BJ (cell line): ENCODE measurements at regions of chr6 and their contacts with region 1.

Region 1: GRCh38 chr6:27146706-27147505 is 100.6 kb upstream of the PRSS16 start:
- DNase-seq: peak; percentile 100
- H3K4me3 ChIP-seq: peak overlapping the region; percentile 63
- H3K27me3 ChIP-seq: no peaks in the 10 kb centered on the region
- CTCF ChIP-seq: no peak

Region 2: GRCh38 chr6:26156076-26156849 is 990.6 kb before region 1 on chr6:
- CTCF ChIA-PET with region 1: no interaction called
- POLR2A ChIA-PET with region 1: interaction called, 14 read pairs
- DNase-seq: peak; percentile 65
- H3K4me3 ChIP-seq: peak overlapping the region; percentile 54
- H3K27me3 ChIP-seq: no peaks in the 10 kb centered on the region
- CTCF ChIP-seq: no peak; the same call in 1 of the 2 replicates

Region 3: DNA sequence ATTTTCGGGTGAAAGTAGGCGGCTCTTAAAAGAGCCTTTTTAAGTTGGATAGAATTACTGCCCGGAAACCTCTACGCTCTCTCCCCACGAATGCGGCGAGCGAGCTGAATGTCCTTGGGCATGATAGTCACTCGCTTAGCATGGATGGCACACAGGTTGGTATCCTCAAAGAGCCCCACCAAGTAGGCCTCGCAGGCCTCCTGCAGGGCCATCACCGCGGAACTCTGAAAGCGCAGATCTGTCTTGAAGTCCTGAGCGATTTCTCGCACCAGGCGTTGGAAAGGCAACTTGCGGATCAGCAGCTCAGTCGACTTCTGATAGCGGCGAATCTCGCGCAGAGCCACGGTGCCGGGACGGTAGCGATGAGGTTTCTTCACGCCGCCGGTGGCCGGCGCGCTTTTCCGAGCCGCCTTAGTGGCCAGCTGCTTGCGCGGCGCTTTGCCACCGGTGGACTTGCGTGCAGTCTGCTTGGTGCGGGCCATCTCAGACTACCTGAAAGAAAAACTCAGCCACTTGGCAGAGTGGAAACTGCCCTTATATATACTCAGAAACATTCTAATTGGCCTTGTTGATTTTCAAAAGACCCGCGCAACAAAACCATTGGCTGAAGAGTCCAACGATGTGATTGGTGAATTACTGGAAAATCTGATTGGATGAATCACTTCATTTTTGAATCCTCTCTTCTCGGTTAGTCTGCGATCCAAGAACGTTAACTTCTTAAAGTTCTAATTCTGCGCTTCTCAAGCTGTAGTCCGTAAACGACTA is 875.8 kb before region 1 on chr6:
- CTCF ChIA-PET with region 1: no interaction called
- POLR2A ChIA-PET with region 1: interaction called, 16 read pairs
- DNase-seq: peak; percentile 61
- H3K4me3 ChIP-seq: peak overlapping the region; percentile 53
- H3K27me3 ChIP-seq: no peaks in the 10 kb centered on the region
- CTCF ChIP-seq: no peak

Region 4: DNA sequence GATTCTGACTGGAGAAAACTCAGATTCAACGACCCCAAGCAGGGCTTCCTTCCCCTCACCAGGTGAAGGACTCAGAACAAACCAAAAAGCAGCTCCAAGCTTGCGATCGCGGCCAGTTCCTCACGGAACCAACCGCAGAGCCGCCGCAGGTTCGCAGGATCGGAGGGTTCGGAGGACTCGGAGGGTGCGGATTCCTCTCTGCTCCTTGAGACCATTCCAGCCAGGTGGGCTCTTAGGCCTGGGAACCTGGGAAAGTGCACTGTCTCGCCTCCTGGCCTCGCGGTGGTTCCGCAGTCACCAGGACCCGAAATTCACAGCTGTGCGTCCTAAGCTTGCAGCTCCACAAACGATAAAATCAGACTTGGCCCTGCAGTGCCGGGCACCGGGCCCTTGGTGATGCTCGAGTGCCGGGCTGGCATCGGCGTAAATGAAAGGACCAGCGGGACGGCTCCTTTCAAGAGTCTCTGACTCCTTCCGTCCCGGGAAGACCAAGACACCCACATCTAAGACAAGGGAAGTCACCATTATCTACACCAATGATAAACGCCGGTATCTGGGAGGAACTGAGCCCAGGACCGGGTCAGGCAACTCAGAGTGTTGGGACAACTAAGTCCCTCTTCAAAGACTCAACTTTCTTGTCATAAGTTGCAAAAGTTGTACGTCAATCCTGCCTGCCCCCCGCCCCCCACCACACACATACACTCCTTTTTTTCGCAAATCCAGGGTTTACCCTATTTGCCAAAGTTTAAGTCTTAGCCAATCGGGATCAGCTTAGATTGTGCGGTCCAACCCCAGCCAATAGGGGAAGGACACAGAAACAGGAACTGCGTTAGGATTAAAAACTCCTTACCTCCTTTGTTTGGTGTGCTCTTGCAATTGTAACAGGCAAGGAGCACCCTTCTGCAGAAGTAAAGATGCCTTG is 30.8 kb after region 1 on chr6:
- CTCF ChIA-PET with region 1: interaction called, 4 read pairs
- POLR2A ChIA-PET with region 1: interaction called, 26 read pairs
- DNase-seq: peak; percentile 71
- H3K4me3 ChIP-seq: peak overlapping the region; percentile 71
- H3K27me3 ChIP-seq: no peaks in the 10 kb centered on the region
- CTCF ChIP-seq: peak; percentile 57

Region 5: DNA sequence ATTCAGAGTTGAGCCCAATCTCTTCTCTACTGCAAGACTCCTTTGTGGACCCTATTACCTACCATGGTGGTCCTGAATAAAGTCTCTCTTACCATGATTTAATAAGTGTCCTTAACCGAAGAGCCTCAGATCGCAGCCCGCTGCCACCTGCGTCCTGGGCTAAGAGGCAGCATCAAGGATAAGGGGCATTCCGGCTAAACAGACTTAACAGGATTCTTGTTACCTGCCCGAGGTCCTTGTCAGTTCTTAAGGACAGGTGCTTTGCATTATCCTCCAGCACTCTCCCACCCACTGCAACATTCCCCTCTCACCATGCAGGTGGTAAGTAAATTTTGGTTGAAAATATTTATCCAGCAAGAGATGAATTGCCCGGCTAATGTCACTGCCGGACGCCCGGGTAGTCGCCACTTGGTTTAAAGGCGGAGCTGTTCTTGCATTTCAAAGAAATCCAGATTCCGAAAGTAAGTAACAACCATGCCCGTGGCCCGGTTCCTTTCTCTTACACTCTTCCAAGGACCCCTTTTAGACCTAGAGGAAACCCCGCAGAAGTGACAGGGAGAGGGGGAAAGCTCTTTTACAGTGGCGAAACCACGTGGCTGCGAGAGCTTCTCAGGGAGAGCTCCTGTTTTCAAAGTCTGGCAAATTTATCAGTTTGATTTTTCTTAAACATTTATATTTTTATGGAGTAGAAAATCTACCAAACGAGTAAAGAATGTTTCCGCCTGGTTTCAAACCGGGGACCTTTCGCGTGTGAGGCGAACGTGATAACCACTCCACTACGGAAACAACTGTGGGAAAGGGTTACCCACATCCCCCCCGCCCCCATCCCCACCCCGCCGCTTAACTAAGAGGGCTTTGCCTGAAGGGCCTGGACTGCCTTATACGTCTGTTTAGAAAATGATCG is 58.7 kb after region 1 on chr6:
- CTCF ChIA-PET with region 1: no interaction called
- POLR2A ChIA-PET with region 1: no interaction called
- DNase-seq: no peak
- H3K4me3 ChIP-seq: no peak overlapping the region
- H3K27me3 ChIP-seq: peaks cover 7% of the 10 kb centered on the region
- CTCF ChIP-seq: no peak

Region 6: GRCh38 chr6:27251606-27252251 is 104.8 kb after region 1 on chr6:
- CTCF ChIA-PET with region 1: no interaction called
- POLR2A ChIA-PET with region 1: no interaction called
- DNase-seq: no peak
- H3K4me3 ChIP-seq: peak overlapping the region; percentile 55
- H3K27me3 ChIP-seq: peaks cover 22% of the 10 kb centered on the region
- CTCF ChIP-seq: peak; percentile 49

Region 7: DNA sequence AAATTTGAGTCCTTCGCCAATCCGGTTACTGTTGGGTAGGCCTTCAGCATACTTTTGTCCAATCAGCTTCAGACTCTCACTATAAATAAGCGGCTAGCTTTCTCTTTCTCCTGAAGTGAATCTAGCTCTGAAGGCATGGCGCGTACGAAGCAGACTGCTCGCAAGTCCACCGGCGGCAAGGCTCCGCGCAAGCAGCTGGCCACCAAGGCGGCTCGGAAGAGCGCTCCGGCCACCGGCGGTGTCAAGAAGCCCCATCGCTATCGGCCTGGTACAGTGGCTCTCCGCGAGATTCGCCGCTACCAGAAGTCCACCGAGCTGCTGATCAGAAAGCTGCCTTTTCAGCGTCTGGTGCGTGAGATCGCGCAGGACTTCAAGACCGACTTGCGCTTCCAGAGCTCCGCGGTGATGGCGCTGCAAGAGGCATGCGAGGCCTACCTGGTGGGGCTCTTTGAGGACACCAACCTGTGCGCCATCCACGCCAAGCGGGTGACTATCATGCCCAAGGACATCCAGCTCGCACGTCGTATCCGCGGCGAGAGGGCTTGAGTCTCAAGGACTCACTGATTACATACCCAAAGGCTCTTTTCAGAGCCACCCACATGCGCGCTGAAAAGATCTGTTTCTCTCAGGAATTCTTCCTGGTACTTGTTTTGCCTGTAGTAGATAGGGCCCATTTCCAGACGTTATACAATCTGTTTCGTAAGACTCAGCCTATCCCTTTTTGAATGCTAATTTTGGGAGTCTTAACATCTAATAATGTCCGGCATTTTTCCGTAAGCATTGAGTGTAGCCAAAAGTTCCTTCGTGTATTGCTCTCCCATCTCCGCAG is 663.2 kb after region 1 on chr6:
- CTCF ChIA-PET with region 1: no interaction called
- POLR2A ChIA-PET with region 1: interaction called, 21 read pairs
- DNase-seq: peak; percentile 92
- H3K4me3 ChIP-seq: peak overlapping the region; percentile 75
- H3K27me3 ChIP-seq: no peaks in the 10 kb centered on the region
- CTCF ChIP-seq: peak; percentile 28